Activated naive CD4-positive, alpha-beta T cell treated with anti-CD3 and anti-CD28 coated beads for 36 hours (primary cell): ENCODE measurements at regions of chr1 and their contacts with region 1.

Region 1: GRCh38 chr1:85321237-85321964 is 45.0 kb upstream of the BCL10 start:
- DNase-seq: peak; percentile 39
- H3K4me3 Mint-ChIP-seq: no peak overlapping the region
- H3K27ac Mint-ChIP-seq: no peak overlapping the region
- H3K4me1 Mint-ChIP-seq: peaks cover 5% of the 10 kb centered on the region
- H3K27me3 Mint-ChIP-seq: peaks cover 11% of the 10 kb centered on the region

Region 2: DNA sequence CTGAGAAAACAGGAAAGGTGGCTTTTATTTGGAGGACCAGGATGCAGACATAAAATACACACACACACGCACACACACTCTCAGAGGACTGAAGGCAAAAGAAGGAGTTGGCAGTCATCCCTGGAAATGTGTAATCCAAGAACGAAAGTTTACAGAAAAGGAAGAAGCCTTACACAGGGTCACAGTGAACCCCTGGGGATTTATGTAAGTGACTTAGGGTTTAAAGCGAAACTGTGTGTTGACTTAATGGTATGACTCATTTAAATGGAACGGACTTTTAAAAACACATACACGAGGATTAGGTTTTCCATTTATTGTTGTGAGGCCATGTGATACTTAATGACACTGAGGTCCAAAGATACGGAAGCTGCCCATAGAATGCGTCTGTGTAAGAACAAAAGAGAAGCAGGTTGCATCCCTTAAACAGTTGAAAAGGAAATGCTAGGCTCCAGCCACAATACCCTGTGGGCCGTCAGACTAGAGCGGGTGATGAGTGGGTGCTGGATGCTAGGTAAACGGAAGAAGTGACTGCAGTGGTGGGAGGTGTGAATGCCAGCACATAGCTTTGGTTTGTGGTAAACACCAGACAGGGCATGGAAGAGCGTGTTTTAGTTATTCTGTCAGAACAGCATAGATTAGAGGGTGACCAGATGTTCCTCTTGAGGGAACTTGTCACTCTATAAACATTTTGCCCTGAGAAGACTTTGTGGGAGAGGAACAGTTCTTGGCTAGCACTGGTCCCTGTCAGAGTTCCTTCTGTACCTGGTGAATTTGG is 23.4 kb before region 1 on chr1:
- CTCF ChIA-PET with region 1: no interaction called
- intact Hi-C with region 1: loop called (anchors 2 kb)
- DNase-seq: peak; percentile 83
- H3K4me3 Mint-ChIP-seq: peak overlapping the region; percentile 8
- H3K27ac Mint-ChIP-seq: peak overlapping the region; percentile 28
- H3K4me1 Mint-ChIP-seq: peaks cover 19% of the 10 kb centered on the region
- H3K27me3 Mint-ChIP-seq: peaks cover 8% of the 10 kb centered on the region